ENCODE measurements at regions of chr11 and their contacts with region 1.

Region 1: DNA sequence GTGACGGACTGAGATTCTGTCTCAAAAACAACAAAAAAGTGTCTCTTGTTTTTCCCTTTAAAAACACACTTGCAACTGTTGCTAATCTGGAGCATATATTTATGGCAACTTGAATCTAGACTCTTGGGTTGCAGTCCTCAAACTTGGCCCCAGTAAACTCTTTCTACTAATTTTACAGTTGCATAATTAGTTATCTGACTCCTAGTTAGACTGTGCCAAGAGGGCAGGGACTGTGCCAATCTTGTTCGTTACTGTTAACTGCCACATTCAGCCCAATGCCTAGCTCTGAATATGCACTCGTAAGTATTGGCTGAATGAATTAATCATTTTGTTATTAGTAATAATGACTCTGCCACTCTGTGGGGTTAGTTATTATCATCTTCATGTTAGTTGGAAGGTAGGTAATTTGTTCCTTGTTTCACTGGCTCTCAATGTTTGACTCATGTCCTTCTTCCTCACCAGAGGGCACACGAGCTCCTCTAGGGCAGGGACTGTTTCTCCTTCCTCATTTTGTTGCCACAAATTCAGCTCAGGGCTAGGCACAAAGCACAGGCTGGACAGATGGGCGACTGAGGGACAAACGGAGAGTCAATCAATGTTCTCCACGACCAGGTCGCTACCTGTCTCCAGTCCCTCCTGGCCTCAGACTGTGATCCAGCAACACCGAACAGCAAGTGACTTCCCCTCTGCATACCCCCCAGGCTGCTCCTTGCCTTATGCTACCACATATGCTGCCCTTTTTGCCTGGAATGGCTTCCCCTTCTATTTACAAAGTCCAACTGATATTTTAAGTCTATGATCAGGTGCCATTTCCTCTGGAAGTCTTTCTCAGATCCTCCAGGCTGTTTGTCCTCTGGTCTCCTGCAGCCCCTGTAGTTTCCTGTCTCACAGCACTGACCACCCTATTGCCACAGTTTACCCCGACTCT is 9.0 kb downstream of the CLPB start:
- DNase-seq: peak in 1 of 2 donors; percentile 60
- ATAC-seq: peak; percentile 71 to 95 (median 82)
- H3K4me3 ChIP-seq: no peak overlapping the region
- H3K27ac ChIP-seq: peak overlapping the region; percentile 30
- H3K4me1 ChIP-seq: peaks cover 45% of the 10 kb centered on the region
- H3K27me3 ChIP-seq: no peaks in the 10 kb centered on the region
- CTCF ChIP-seq: no peak

Region 2: GRCh38 chr11:72112321-72113219 is 312.7 kb before region 1 on chr11 and contains the start of gene ANAPC15:
- intact Hi-C with region 1: loop called in 1 of 2 experiments (anchors 10 kb)
- DNase-seq: peak; percentile 97 to 98
- ATAC-seq: peak; percentile 92 to 94 (median 93)
- H3K4me3 ChIP-seq: peak within 1 kb of the TSS; percentile 80
- H3K27ac ChIP-seq: peak within 1 kb of the TSS; percentile 88
- H3K4me1 ChIP-seq: peaks cover 4% of the 10 kb centered on the region
- H3K27me3 ChIP-seq: no peaks in the 10 kb centered on the region
- CTCF ChIP-seq: no peak
- total RNA-seq, gene ANAPC15: 32.7 to 45.7 (median 37.1) TPM

Region 3: GRCh38 chr11:72328366-72329224 is 96.7 kb before region 1 on chr11:
- intact Hi-C with region 1: loop called in 1 of 2 experiments (anchors 5 kb)
- DNase-seq: no peak
- ATAC-seq: peak in 1 of 4 donors; percentile 34
- H3K4me3 ChIP-seq: no peak overlapping the region
- H3K27ac ChIP-seq: no peak overlapping the region
- H3K4me1 ChIP-seq: peaks cover 25% of the 10 kb centered on the region
- H3K27me3 ChIP-seq: no peaks in the 10 kb centered on the region
- CTCF ChIP-seq: peak; percentile 16

Measured in psoas muscle (tissue), 8 donors.